H1 (cell line): ENCODE measurements at regions of chr10 and their contacts with region 1.

Region 1: DNA sequence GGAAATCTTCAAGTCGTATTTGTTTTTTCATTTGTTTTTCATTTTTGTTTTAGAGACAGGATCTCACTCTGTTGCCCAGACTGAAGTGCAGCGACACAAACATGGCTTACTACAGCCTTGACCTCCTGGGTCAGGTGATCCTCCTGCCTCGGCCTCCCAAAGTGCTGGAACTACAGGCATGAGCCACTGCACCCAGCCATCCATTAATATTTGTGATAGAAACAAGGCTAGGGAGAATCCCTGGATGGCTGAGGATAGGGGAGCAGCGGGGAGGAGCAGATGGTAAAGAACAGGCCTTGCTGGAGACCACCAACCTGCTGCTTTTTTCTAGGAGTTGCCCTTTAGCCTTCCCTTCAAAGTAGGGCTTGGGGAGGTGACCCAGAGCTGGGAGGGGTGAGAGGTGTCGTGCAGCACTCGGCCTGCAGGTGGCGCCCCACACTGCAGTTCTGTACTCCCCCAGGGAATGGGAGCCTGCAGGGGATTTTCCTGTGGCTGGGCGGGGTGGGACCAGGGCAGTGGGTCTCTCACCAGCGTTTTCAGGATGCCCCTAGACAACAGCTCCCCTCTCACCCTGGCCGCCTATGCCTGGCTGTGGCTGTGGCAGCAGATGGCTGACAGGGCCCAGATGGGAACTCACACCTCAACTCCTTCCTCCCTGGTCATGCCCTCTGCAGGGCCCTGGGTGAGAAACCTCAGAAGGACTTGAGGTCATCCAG is 12.6 kb upstream of the CDH23 start:
- DNase-seq: peak; percentile 58 to 99
- H3K4me3 ChIP-seq: no peak overlapping the region
- H3K27ac ChIP-seq: no peak overlapping the region
- H3K4me1 ChIP-seq: no peaks in the 10 kb centered on the region
- H3K27me3 ChIP-seq: no peaks in the 10 kb centered on the region
- CTCF ChIP-seq: peak; percentile 93 to 96 (median 95)
- EP300 ChIP-seq: no peak
- POLR2A ChIP-seq: no peak
- RAD21 ChIP-seq: peak; percentile 91 to 92

Region 2: GRCh38 chr10:71085689-71086438 is 298.3 kb before region 1 on chr10:
- CTCF ChIA-PET with region 1: no interaction called
- POLR2A ChIA-PET with region 1: no interaction called
- DNase-seq: peak in 1 of 2 experiments; percentile 44
- H3K4me3 ChIP-seq: no peak overlapping the region
- H3K27ac ChIP-seq: no peak overlapping the region
- H3K4me1 ChIP-seq: peaks cover 0 to 14% (median 3%) of the 10 kb centered on the region in 4 experiments; a peak in 3 of 7 replicates
- H3K27me3 ChIP-seq: no peaks in the 10 kb centered on the region; a peak in 1 of 7 replicates
- CTCF ChIP-seq: no peak
- EP300 ChIP-seq: no peak
- POLR2A ChIP-seq: no peak
- RAD21 ChIP-seq: no peak

Region 3: GRCh38 chr10:71561003-71561574 is 177.0 kb after region 1 on chr10:
- CTCF ChIA-PET with region 1: interaction called, 16 read pairs
- POLR2A ChIA-PET with region 1: no interaction called
- DNase-seq: no peak
- H3K4me3 ChIP-seq: no peak overlapping the region
- H3K27ac ChIP-seq: no peak overlapping the region
- H3K4me1 ChIP-seq: peaks cover 2 to 14% (median 10%) of the 10 kb centered on the region in 4 experiments
- H3K27me3 ChIP-seq: 0 out of 7 replicates have a peak, but pooled peaks cover 0 to 2% (median 0%) of the 10 kb centered on the region in 4 experiments
- CTCF ChIP-seq: no peak
- EP300 ChIP-seq: no peak
- POLR2A ChIP-seq: no peak
- RAD21 ChIP-seq: no peak